Activated CD4-positive, alpha-beta T cell treated with anti-CD3 and anti-CD28 coated beads, Interleukin-2, amount 10 ng/mL, durations not matched to agents 24 days and 14 days (primary cell): ENCODE measurements at regions of chrX and their contacts with region 1.

Region 1: DNA sequence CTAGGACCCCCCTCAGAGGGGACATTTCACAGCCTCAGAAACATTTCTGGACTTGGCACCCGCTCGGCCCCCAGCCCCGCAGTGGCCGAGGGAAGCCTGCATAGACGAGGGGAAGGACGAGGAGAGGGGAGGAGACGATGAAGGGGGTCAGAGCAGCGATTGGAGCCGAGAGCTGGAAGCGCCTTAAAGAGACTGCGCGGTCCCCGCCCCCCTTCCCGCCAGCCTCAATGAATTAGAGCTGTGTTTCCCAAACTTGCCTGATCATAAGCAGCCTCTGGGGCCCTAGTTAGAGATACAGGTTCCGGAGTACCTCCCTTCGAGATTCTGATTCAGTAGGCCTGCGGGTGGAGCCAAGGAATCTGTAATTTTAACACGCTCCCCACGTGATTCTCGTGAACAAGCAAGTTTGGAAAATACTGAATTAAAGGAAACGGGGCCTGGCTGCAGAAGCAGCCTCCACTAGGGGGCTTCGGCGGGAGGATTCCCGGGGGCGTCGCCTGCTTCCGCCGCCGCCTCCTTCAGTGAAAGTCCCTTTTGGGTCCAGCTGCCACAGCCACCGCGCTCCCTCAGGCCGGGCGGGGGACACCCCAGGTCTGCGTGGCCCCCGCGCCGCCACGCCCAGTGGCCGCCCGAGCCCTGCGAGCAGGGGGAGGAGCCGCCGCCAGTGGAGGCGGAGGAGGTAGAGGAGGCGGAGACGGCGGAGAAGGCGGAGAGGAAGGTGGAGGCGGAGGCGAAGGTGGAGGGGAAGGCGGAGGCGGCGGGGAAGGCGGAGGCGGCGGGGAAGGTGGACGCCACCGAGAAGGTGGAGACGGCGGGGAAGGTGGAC is at the start of gene USP27X:
- DNase-seq: peak; percentile 94
- H3K4me3 Mint-ChIP-seq: peak within 1 kb of the TSS; percentile 80
- H3K27ac Mint-ChIP-seq: peak within 1 kb of the TSS; percentile 77
- H3K4me1 Mint-ChIP-seq: peaks cover 14% of the 10 kb centered on the region
- H3K27me3 Mint-ChIP-seq: no peaks in the 10 kb centered on the region
- total RNA-seq, gene USP27X: 1.6 and 2.4 TPM in 2 replicates

Region 2: DNA sequence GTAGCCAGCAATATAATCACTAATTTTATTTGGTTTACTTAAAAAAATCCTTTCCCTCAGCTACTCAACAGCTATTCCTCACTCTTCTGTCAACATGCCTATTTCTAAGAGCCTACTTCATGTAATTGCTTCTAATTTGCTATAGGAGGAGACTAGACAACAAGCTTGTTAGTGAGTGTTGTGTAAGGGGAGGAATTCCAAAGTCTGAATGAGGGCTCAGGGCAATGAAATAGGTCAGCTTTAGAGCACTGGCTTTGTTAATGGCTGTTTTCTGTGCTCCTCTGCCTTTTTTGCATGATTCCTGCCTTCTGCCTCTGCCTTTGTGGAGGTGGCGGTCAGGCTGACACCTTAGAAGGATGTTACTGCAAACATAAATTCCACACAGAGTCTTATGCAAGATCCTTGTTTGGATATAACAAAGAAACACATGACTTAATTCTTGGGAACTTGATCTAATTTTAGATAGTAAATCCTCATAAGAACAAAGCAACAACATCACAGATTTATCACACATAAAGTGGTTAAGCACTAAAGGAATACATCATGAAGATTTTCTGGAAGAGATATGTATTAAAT is 168.2 kb before region 1 on chrX:
- intact Hi-C with region 1: no loop called
- DNase-seq: no peak
- H3K4me3 Mint-ChIP-seq: no peak overlapping the region
- H3K27ac Mint-ChIP-seq: no peak overlapping the region
- H3K4me1 Mint-ChIP-seq: no peaks in the 10 kb centered on the region
- H3K27me3 Mint-ChIP-seq: peaks cover 5% of the 10 kb centered on the region

Region 3: DNA sequence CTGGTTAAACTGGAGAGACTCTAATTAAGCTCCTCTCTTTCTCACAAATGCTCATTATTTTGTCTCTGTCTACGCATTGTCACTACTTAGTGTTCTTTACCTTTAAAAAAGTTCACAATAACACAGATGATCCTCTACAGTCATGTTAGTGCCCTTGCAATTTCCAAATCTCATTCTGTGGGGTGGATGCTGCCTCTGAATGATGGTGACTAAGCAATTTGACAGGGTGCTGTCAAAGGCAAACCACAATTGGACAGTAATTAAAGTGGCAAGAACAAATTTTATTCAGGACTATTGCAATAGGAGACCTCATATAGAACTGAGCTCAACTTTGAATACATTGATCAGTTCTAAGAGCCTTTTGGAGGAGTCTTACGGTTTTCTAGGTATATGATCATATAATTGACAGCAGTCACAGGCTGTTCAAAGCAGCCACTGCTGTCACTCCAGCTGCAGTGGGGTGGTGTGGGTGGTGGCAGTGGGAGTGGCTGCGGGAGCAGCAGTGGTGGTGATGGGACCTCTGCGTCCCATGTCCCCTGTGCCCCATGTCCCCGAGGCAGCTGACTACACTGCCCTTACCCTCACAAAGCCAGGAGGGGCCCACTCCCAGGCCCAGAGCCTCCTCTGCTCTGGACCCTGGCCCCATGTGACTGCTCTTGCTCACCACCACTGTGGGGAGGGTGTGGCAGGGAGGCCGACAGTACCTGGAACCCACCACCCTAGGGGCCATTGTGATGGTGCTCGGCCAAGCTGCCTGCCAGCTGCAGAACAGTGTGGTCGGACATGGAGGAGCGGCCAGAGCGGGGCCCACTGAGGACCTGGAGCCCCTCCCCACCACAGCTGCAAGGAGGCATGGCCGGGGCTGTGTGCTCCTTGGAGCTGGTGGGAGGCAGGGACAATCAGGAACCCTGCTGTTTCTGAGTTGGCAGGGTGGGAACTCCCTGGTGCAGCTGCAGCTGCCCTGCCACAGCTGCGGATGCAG is 152.8 kb before region 1 on chrX:
- intact Hi-C with region 1: no loop called
- DNase-seq: no peak
- H3K4me3 Mint-ChIP-seq: no peak overlapping the region
- H3K27ac Mint-ChIP-seq: no peak overlapping the region
- H3K4me1 Mint-ChIP-seq: no peaks in the 10 kb centered on the region
- H3K27me3 Mint-ChIP-seq: no peaks in the 10 kb centered on the region

Region 4: GRCh38 chrX:49761481-49761880 is 117.6 kb before region 1 on chrX:
- intact Hi-C with region 1: loop called (anchors 10 kb)
- DNase-seq: peak; percentile 60
- H3K4me3 Mint-ChIP-seq: no peak overlapping the region
- H3K27ac Mint-ChIP-seq: no peak overlapping the region
- H3K4me1 Mint-ChIP-seq: no peaks in the 10 kb centered on the region
- H3K27me3 Mint-ChIP-seq: peaks cover 10% of the 10 kb centered on the region

Region 5: GRCh38 chrX:49922291-49923241 is 43.5 kb after region 1 on chrX and contains the start of gene CLCN5:
- intact Hi-C with region 1: loop called (anchors 1 kb)
- DNase-seq: peak; percentile 98
- H3K4me3 Mint-ChIP-seq: peak within 1 kb of the TSS; percentile 80
- H3K27ac Mint-ChIP-seq: peak within 1 kb of the TSS; percentile 68
- H3K4me1 Mint-ChIP-seq: peaks cover 6% of the 10 kb centered on the region
- H3K27me3 Mint-ChIP-seq: no peaks in the 10 kb centered on the region
- total RNA-seq, gene CLCN5: 4.2 and 5.6 TPM in 2 replicates

Region 6: GRCh38 chrX:49951524-49952193 is 72.6 kb after region 1 on chrX:
- intact Hi-C with region 1: no loop called
- DNase-seq: no peak
- H3K4me3 Mint-ChIP-seq: no peak overlapping the region
- H3K27ac Mint-ChIP-seq: no peak overlapping the region
- H3K4me1 Mint-ChIP-seq: peaks cover 2% of the 10 kb centered on the region
- H3K27me3 Mint-ChIP-seq: no peaks in the 10 kb centered on the region

Region 7: DNA sequence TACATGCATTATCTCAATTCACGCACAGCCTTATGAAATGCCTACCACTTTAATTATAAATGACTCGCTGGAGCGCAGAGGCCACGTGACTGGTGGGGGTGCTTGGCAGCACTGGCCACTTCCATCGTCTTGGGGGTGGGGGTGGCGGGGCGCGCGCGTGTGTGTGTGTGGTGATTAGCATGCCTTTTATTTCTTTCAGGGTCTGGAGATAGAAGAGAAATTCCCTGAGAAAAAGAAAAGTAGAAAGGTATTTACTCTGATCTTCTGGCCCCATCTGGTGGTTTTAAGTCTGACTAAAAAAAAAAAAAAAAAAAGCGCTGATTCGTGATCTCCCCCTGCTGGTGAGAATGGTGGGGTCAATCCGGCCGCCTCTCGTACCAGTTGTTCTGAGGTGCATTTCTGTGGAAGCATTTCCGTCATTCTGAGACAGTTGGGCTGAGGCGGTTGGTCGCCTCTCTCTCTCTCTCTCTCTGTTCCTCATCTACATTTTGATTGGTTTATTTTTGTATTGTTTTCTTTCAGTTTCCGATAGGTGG is 325.4 kb after region 1 on chrX and contains the start of gene CCNB3:
- intact Hi-C with region 1: loop called (anchors 1 kb)
- DNase-seq: peak; percentile 89
- H3K4me3 Mint-ChIP-seq: peak within 1 kb of the TSS; percentile 84
- H3K27ac Mint-ChIP-seq: peak within 1 kb of the TSS; percentile 91
- H3K4me1 Mint-ChIP-seq: peaks cover 8% of the 10 kb centered on the region
- H3K27me3 Mint-ChIP-seq: peaks cover 2% of the 10 kb centered on the region
- total RNA-seq, gene CCNB3: 0.56 and 1.0 TPM in 2 replicates